ENCODE measurements at regions of chr13 and their contacts with region 1.

Region 1: DNA sequence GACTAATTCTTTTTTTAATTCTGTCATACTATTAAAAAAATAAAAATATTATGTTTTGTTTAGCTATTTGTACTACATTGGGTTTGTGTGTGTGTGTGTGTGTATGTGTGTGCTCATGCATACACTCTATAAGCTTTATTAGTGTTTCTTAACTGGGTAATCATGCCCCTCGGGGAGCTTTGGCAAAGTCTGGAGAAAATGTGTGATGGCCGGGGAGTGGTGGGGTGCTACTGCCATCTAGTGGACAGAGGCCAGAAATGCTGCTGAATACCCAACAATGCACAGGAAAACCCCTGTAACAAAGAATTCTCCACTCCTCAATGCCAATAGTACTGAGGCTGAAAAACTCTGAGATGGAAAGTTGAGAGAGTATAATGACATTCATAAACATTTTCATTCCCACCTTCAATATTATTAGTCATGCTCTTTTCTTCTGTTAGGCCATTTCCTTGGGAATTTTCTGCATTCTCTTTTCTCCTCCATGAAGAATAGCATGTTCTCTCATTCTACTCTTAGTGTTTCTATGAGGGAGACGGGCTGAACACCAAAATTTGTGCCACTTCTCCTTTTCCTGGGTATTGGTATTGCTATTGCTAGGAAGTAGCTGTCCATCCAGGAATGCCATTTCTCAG is 157.3 kb downstream of the DNAJC3 start:
- DNase-seq: peak; percentile 40 to 60 (median 50)
- ATAC-seq: peak in 3 of 4 donors; percentile 61 to 70 (median 70)
- H3K4me3 ChIP-seq: no peak overlapping the region
- H3K27ac ChIP-seq: no peak overlapping the region
- H3K4me1 ChIP-seq: peaks cover 0 to 9% (median 2%) of the 10 kb centered on the region in 12 donors
- H3K27me3 ChIP-seq: no peaks in the 10 kb centered on the region
- CTCF ChIP-seq: peak; percentile 80 to 97 (median 92)
- POLR2A ChIP-seq: no peak

Region 2: DNA sequence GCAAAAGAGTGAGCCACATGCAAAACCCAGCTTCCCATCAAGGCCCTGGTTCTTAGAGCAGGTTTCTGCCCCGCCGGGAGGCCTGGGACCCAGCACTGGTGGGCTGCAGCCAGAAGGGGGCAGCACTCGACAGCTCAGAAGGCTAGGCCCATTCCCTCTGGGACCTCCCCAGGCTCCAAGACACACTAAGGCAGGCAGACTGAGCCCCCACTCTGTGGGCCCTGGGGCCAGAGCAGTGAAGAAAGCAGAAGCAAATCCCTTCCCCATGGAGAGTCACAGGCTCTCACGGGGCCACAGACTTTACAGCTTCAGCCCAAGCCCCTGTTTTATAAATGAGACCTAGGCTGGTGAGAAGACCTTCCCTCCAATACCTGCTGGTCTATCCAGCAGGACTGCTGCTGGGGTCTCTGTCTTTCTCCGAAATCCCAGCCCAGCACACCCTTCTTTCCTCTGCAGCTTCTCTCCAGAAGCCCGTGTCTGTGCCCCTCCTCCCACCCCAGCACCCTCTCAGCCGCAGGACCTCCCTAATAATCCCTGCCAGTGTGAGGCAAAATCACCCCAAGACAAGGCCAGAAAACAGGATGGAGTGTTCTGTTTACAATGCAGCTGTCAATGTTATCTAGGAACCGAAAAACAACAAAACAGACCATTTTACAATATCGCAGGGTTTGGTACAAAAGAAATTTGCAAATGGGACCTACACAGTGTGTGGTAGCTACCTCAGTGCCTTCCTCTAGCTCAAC is 642.3 kb before region 1 on chr13:
- intact Hi-C with region 1: loop called in 6 of 10 experiments (anchors 5 to 10 kb)
- DNase-seq: peak; percentile 72 to 89 (median 76)
- ATAC-seq: peak; percentile 81 to 96 (median 92)
- H3K4me3 ChIP-seq: no peak overlapping the region
- H3K27ac ChIP-seq: no peak overlapping the region
- H3K4me1 ChIP-seq: peaks cover 0 to 2% (median 0%) of the 10 kb centered on the region in 12 donors
- H3K27me3 ChIP-seq: no peaks in the 10 kb centered on the region
- CTCF ChIP-seq: peak; percentile 77 to 90 (median 86)
- POLR2A ChIP-seq: no peak

Region 3: DNA sequence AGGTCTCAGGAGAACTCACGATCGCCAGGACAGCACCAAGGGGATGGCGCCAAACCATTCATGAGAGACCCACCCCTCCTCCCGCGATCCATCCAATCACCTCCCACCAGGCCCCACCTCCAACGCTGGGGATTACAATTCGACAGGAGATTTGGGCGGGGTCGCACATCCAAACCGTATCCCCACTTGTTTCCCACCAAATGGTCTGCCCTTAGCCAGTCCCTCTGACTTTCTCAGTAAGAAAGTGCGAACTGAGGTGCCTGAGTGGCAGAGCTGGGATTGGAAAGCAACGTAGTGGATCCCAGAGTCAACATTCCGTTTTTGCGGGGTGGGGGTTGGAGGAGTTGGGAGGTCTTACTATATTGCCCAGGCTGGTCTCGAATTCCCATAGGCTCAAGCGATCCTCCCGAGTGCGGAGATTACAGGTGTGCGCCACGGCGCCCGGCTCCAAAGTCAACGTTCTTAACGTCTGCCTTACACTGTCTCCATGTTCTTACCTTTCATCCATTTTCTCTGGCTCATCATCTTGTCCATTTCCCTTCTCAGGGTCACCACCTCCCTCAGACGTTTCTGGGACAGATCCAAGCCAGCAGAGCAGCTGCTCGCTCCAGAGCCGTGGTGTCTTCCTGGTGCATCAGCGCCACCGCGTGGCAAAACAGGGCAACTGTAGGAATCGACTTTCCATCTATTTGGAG is 430.3 kb before region 1 on chr13:
- intact Hi-C with region 1: loop called in 1 of 10 experiments (anchors 10 kb)
- DNase-seq: peak; percentile 81 to 90 (median 82)
- ATAC-seq: peak; percentile 72 to 96 (median 94)
- H3K4me3 ChIP-seq: peak overlapping the region in 10 of 12 donors; percentile 25 to 54 (median 44)
- H3K27ac ChIP-seq: no peak overlapping the region
- H3K4me1 ChIP-seq: peaks cover 0 to 8% (median 5%) of the 10 kb centered on the region in 12 donors
- H3K27me3 ChIP-seq: peaks cover 0 to 4% (median 0%) of the 10 kb centered on the region in 9 donors
- CTCF ChIP-seq: peak; percentile 89 to 97 (median 93)
- POLR2A ChIP-seq: no peak

Region 4: GRCh38 chr13:95536632-95537241 is 297.5 kb before region 1 on chr13:
- intact Hi-C with region 1: loop called in 8 of 10 experiments (anchors 2 to 10 kb)
- DNase-seq: no peak
- ATAC-seq: no peak
- H3K4me3 ChIP-seq: no peak overlapping the region
- H3K27ac ChIP-seq: no peak overlapping the region
- H3K4me1 ChIP-seq: peaks cover 0 to 13% (median 5%) of the 10 kb centered on the region in 12 donors
- H3K27me3 ChIP-seq: peaks cover 0 to 4% (median 0%) of the 10 kb centered on the region in 9 donors
- CTCF ChIP-seq: peak; percentile 18 to 59 (median 46)
- POLR2A ChIP-seq: no peak

Region 5: GRCh38 chr13:95931300-95932025 is 97.2 kb after region 1 on chr13:
- intact Hi-C with region 1: no loop called
- DNase-seq: peak in 1 of 5 donors; percentile 51
- ATAC-seq: no peak
- H3K4me3 ChIP-seq: no peak overlapping the region
- H3K27ac ChIP-seq: no peak overlapping the region
- H3K4me1 ChIP-seq: no peaks in the 10 kb centered on the region
- H3K27me3 ChIP-seq: no peaks in the 10 kb centered on the region
- CTCF ChIP-seq: no peak
- POLR2A ChIP-seq: no peak

Region 6: GRCh38 chr13:96053011-96053703 is 218.9 kb after region 1 on chr13 and contains the start of gene UGGT2:
- intact Hi-C with region 1: no loop called
- DNase-seq: peak; percentile 95 to 98 (median 96)
- ATAC-seq: peak; percentile 100
- H3K4me3 ChIP-seq: peak within 1 kb of the TSS; percentile 58 to 99 (median 78)
- H3K27ac ChIP-seq: peak within 1 kb of the TSS; percentile 11 to 90 (median 82)
- H3K4me1 ChIP-seq: peaks cover 0 to 13% (median 6%) of the 10 kb centered on the region in 12 donors
- H3K27me3 ChIP-seq: no peaks in the 10 kb centered on the region
- CTCF ChIP-seq: peak in 2 of 12 donors; percentile 36 to 37
- POLR2A ChIP-seq: peak in 1 of 2 donors; percentile 80
- total RNA-seq, gene UGGT2: 9.6 to 15.9 (median 13.5) TPM